Endothelial cell of umbilical vein (primary cell): ENCODE measurements at regions of chr12 and their contacts with region 1.

Region 1: DNA sequence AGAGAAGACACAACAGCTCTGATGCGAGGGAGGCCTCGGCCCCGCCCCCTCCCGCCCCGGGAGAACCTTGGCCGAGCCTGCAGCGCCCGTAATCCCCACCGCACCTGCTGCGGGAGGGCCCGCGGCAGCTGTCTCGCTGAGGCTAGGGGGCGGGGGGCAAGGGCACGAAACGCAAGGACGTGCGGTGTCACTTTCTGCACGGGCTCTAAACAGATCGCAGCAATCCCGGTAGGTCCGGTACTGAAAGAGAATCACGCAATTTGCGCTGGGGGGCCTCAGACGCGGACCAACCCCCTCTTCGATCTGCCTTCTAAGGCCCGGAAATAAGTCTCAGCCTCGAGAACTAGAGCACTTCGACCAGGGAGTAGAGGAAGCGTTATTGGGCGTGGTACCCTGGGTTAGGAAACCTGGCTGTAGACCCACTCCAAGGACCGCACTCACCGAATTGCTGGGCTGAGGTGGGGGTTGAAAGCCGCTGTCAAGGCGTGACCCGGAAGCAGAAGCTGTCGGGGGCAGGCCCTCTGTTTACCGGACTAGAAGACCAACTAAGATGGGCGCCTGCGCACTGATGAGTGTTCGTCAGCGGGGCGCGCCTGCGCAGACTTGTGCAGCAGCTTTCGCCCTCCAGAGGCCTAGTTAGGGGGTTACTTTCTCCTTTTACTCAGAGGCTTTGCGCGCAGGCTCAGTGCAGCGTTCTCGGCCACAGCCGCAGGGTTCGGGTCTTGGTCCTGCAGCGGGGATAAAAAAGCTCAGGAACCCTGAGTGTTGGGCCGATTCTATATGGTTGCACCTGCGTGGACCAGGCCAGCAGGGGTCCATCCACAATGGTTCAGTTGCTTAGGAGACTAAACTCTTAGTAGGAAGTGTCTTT is at the start of gene ASB8:
- DNase-seq: peak; percentile 99
- H3K4me3 ChIP-seq: peak within 1 kb of the TSS; percentile 35 to 66 (median 54)
- H3K27ac ChIP-seq: peak within 1 kb of the TSS; percentile 0
- H3K4me1 ChIP-seq: peaks cover 3% of the 10 kb centered on the region
- H3K27me3 ChIP-seq: peaks cover 4 to 7% of the 10 kb centered on the region in 2 experiments
- CTCF ChIP-seq: peak; percentile 44 to 54
- POLR2A ChIP-seq: peak; percentile 84
- total RNA-seq, gene ASB8: 26.5 and 29.7 TPM in 2 replicates

Region 2: GRCh38 chr12:48001505-48002413 is 155.5 kb before region 1 on chr12:
- CTCF ChIA-PET with region 1: interaction called, 3 read pairs
- POLR2A ChIA-PET with region 1: no interaction called
- dilution Hi-C with region 1: no loop called
- intact Hi-C with region 1: loop called (anchors 5 kb)
- DNase-seq: peak; percentile 39
- H3K4me3 ChIP-seq: peak overlapping the region; percentile 34 to 66 (median 61)
- H3K27ac ChIP-seq: no peak overlapping the region
- H3K4me1 ChIP-seq: peaks cover 24% of the 10 kb centered on the region
- H3K27me3 ChIP-seq: peaks cover 75 to 93% of the 10 kb centered on the region in 2 experiments
- CTCF ChIP-seq: no peak
- POLR2A ChIP-seq: no peak

Region 3: DNA sequence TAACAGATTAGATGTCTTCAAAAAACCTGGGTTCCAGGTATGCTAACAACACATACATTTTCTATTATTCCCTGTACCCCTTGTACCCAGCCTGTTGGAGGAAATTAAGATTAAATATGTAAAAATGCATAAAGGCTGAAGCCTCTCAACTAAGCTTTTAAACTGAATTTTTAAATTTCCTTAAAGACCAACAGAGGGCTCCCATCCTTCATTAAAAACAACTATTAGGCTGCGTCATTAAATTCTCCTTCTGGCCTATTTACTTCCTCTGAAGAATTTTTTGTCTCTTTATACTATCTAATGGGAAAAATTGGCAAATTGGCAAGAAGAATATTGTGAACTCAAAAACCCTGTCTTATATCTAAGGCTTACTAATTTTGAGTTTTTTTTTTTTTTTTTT is 73.2 kb before region 1 on chr12:
- CTCF ChIA-PET with region 1: interaction called, 6 read pairs
- POLR2A ChIA-PET with region 1: no interaction called
- dilution Hi-C with region 1: no loop called
- intact Hi-C with region 1: loop called (anchors 2 kb)
- DNase-seq: peak; percentile 15
- H3K4me3 ChIP-seq: no peak overlapping the region
- H3K27ac ChIP-seq: no peak overlapping the region
- H3K4me1 ChIP-seq: no peaks in the 10 kb centered on the region
- H3K27me3 ChIP-seq: no peaks in the 10 kb centered on the region
- CTCF ChIP-seq: no peak
- POLR2A ChIP-seq: no peak

Region 4: DNA sequence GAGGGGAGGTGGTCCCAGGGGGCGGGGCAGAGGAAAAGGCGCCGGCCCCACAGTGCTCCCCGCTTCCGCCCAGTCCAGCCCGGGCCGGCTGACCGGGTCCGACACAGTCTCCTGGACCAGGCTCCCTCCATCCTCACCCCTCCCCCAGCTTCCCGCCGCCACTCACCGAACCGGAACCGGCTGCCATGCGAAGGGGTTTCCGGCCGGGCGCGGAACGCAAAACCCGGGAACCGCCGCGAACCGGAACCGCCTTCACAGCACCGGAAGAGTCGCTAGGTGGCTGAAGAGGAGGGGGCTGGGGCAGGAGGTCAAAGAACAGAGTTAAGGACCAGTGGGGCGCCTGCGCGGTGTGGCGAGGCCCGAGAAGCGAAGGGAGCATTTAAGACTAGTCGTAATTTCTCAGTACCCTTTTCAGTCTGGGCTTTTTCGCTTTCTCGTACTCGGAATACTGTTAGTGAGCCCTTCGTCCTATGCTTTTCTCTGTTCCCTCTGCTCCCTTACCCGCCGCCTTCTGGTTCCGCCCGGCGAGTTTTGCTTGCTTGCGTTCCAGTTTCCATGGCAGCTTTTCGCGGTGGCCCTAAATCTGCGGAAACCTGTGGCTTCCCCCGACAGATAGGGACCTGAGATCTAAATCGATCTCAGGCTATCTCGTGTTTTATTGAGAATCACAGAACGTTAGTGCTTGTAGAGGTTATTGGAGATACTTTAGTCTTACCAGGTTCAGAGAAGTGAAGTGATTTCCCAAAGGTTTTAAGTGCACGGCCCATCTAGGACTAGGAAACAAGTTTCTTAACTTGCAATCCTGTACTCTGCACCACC is 51.2 kb before region 1 on chr12 and contains the start of gene SENP1:
- CTCF ChIA-PET with region 1: interaction called, 8 read pairs
- POLR2A ChIA-PET with region 1: no interaction called
- dilution Hi-C with region 1: no loop called
- intact Hi-C with region 1: loop called (anchors 1 kb)
- DNase-seq: peak; percentile 85
- H3K4me3 ChIP-seq: peak within 1 kb of the TSS; percentile 41 to 91 (median 81)
- H3K27ac ChIP-seq: peak within 1 kb of the TSS; percentile 98
- H3K4me1 ChIP-seq: peaks cover 12% of the 10 kb centered on the region
- H3K27me3 ChIP-seq: peaks cover 0 to 2% of the 10 kb centered on the region in 2 experiments
- CTCF ChIP-seq: peak in 1 of 2 donors; percentile 11
- POLR2A ChIP-seq: peak; percentile 83
- total RNA-seq, gene SENP1: 20.5 and 21.3 TPM in 2 replicates

Region 5: GRCh38 chr12:48189331-48190125 is 32.3 kb after region 1 on chr12:
- CTCF ChIA-PET with region 1: interaction called, 12 read pairs
- POLR2A ChIA-PET with region 1: no interaction called
- dilution Hi-C with region 1: no loop called
- intact Hi-C with region 1: no loop called
- DNase-seq: peak; percentile 82
- H3K4me3 ChIP-seq: no peak overlapping the region
- H3K27ac ChIP-seq: no peak overlapping the region
- H3K4me1 ChIP-seq: peaks cover 2% of the 10 kb centered on the region
- H3K27me3 ChIP-seq: peaks cover 25 to 38% of the 10 kb centered on the region in 2 experiments
- CTCF ChIP-seq: peak; percentile 62 to 78
- POLR2A ChIP-seq: no peak

Region 6: DNA sequence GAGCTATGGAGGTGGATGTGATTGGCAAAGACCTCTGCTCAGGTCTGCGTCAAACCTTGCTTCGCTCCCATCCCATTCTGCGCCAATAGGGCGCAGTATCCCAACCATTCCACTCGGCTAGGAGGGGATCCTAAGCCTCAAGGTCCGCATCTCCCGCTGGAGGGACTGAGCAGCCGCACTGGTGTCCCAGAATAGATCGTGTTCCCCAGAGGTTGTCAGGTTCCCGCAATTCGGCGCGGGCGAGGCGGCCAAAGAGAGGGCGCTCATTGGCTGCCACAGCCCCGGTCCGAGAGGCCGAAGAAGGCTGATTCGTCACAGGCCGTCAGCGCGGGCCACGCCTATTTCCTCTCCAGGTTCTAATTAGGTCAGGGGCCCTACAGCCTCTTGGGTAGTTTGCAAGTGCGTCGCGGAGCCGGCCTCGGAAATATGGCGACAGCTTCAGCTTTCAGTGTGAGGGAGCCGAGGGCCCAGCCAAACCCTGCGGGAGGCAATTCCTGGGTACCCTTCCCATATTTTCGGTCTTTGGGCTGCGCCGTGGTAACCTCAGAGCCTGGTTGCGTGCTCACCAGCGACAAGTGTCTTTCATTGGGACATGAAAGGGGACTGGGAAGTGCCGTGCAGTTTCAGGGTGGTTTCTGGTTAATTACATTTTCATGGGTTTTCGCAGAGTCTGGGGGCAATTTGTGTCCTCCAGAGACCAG is 40.9 kb after region 1 on chr12:
- CTCF ChIA-PET with region 1: interaction called, 11 read pairs
- POLR2A ChIA-PET with region 1: no interaction called
- dilution Hi-C with region 1: no loop called
- intact Hi-C with region 1: no loop called
- DNase-seq: peak; percentile 94
- H3K4me3 ChIP-seq: peak overlapping the region; percentile 23 to 71 (median 44)
- H3K27ac ChIP-seq: peak overlapping the region; percentile 67
- H3K4me1 ChIP-seq: peaks cover 10% of the 10 kb centered on the region
- H3K27me3 ChIP-seq: peaks cover 0 to 19% of the 10 kb centered on the region in 2 experiments
- CTCF ChIP-seq: no peak
- POLR2A ChIP-seq: peak; percentile 96